ENCODE measurements at regions of chr4 and their contacts with region 1.

Region 1: DNA sequence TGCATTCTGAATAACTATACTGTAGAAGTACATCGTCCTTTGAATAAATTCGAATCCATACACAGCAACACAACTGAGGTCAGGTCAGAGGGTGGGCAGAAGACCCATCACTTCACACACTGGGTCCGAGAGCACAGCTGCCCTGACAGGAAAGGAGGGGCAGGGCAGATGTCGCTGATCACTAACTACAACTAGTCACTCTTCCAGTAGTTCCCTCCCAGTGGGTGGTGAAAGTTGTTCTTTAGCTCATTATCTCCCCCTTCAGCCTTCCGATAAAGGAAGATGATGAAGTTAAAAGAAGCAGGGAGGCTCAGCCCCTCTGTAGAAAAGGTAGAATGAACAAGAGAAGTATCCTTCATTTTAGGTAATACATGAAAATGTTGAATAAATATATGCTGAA is 278.9 kb downstream of the INPP4B start:
- DNase-seq: peak; percentile 51
- H3K4me3 Mint-ChIP-seq: peak overlapping the region; percentile 93
- H3K27ac Mint-ChIP-seq: peak overlapping the region; percentile 97
- H3K4me1 Mint-ChIP-seq: peaks cover 76% of the 10 kb centered on the region
- H3K27me3 Mint-ChIP-seq: no peaks in the 10 kb centered on the region

Region 2: DNA sequence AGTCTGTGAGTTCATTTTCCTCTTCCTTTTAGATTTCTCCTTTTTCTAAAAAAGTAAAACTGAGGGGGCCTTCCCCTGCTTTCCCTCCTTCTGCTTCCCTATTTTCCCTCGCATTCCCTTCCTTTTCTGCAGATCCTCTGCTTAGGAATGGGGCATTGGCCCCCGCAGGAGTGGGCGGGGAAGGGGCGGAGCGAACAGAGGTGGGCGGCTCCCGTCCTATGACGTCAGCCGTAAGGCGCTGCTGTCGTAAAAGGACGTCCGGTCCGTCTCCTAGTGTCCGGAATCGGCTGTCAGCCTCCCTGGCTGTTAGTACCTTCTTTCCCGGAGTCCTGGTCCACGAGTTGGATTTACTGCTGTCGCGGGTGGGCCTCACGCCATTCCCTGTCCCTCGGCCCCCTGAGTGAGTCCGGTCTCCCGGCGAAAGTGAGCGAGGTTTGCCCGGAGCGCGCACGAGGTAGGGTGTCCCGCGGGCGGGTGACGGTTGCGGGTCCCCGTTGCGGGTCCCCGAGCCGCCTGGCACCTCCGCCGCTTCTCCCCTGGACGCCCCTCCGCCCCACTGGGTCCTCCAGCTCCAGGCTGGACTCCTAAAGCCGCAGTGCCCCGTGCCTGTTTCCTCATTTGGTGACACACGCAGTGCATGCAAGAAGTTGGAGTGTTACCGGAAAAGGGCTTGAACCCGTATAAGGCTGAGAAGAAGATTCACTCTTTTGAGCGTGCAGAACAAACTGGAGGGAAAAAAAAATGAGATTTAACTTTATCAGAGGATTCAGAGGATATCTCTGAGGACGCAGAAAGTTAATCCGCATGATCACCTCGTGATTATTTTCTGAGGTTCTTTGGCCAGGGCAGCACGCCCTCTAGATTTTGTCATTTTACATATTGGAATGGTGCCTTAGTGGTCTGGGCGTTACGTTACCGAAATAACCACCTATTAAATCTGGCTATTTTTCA is 1346.3 kb before region 1 on chr4 and contains the start of gene ZNF330:
- intact Hi-C with region 1: loop called (anchors 1 kb)
- DNase-seq: peak; percentile 83
- H3K4me3 Mint-ChIP-seq: peak within 1 kb of the TSS; percentile 93
- H3K27ac Mint-ChIP-seq: peak within 1 kb of the TSS; percentile 98
- H3K4me1 Mint-ChIP-seq: peaks cover 47% of the 10 kb centered on the region
- H3K27me3 Mint-ChIP-seq: peaks cover 6% of the 10 kb centered on the region
- total RNA-seq, gene ZNF330: 57.8 and 62.9 TPM in 2 replicates

Region 3: GRCh38 chr4:142282870-142283431 is 284.2 kb before region 1 on chr4:
- intact Hi-C with region 1: loop called (anchors 1 kb)
- DNase-seq: no peak
- H3K4me3 Mint-ChIP-seq: no peak overlapping the region
- H3K27ac Mint-ChIP-seq: no peak overlapping the region
- H3K4me1 Mint-ChIP-seq: peaks cover 5% of the 10 kb centered on the region
- H3K27me3 Mint-ChIP-seq: no peaks in the 10 kb centered on the region

Region 4: GRCh38 chr4:142405021-142405694 is 162.0 kb before region 1 on chr4:
- intact Hi-C with region 1: loop called (anchors 1 kb)
- DNase-seq: peak; percentile 51
- H3K4me3 Mint-ChIP-seq: peak overlapping the region; percentile 97
- H3K27ac Mint-ChIP-seq: peak overlapping the region; percentile 99
- H3K4me1 Mint-ChIP-seq: peaks cover 78% of the 10 kb centered on the region
- H3K27me3 Mint-ChIP-seq: no peaks in the 10 kb centered on the region

Region 5: GRCh38 chr4:142696334-142697122 is 129.3 kb after region 1 on chr4:
- intact Hi-C with region 1: loop called (anchors 5 kb)
- DNase-seq: no peak
- H3K4me3 Mint-ChIP-seq: peak overlapping the region; percentile 43
- H3K27ac Mint-ChIP-seq: peak overlapping the region; percentile 78
- H3K4me1 Mint-ChIP-seq: peaks cover 53% of the 10 kb centered on the region
- H3K27me3 Mint-ChIP-seq: no peaks in the 10 kb centered on the region

Region 6: DNA sequence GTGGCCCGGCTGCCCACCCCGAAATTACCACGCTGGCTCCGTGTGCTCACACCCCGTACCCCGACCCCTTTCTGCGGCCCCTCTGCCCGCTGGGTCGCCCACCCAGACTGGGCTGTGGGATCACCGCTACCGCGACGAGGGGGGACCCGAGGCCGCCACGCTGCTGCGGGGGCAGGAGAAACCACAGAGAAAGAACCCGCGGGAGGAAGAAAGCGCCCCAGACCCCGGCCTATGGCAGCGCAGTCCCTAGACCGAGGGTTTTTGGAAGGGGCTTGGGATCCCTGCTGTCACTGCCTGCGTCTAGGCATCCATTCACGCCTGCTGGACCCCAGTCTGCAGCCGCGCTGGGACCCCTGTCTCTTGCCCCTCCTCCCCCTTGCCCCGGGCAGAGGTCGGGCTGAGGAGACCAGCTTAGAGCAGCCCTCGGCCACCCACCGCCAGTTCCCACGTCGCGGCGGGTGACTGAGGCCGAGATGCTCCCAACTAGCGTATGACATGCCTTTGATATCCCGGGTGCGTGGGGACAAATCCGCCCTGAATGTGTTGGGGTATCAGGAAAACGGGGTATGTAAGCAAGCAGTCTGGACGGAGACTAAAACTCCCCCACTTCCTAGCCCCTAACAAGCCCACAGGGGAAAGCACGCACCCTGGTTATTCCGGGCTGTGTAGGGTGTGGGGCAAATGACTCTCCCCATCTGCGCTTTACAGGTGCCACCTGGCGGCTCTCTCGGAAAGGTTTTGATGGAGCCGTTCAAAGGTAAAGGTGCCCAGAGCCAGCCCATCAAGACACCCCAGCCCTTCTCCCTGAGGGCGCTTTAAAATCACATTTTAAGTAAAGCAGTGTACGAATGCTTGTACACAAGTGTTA is 279.8 kb after region 1 on chr4:
- intact Hi-C with region 1: loop called (anchors 2 kb)
- DNase-seq: peak; percentile 60
- H3K4me3 Mint-ChIP-seq: peak overlapping the region; percentile 89
- H3K27ac Mint-ChIP-seq: peak overlapping the region; percentile 80
- H3K4me1 Mint-ChIP-seq: peaks cover 18% of the 10 kb centered on the region
- H3K27me3 Mint-ChIP-seq: peaks cover 22% of the 10 kb centered on the region

Region 7: GRCh38 chr4:144267084-144267483 is 1699.9 kb after region 1 on chr4:
- intact Hi-C with region 1: no loop called
- DNase-seq: no peak
- H3K4me3 Mint-ChIP-seq: no peak overlapping the region
- H3K27ac Mint-ChIP-seq: no peak overlapping the region
- H3K4me1 Mint-ChIP-seq: no peaks in the 10 kb centered on the region
- H3K27me3 Mint-ChIP-seq: no peaks in the 10 kb centered on the region

Measured in activated T-helper 1 cell treated with anti-CD3 and anti-CD28 coated beads, Interleukin-12 subunit alpha, Interleukin-12 subunit beta, Interleukin-2, Interleukin-4 antibody, amounts not matched to agents 30 ng/mL and 10 ng/mL and 1 ng/mL, durations not matched to agents 14 hours and 24 hours and 36 hours (primary cell).